ENCODE measurements at regions of chr5 and their contacts with region 1.

Region 1: GRCh38 chr5:39578887-39579497 is 154.2 kb upstream of the DAB2 start:
- DNase-seq: no peak
- H3K4me3 ChIP-seq: no peak overlapping the region
- H3K27ac ChIP-seq: no peak overlapping the region
- H3K27me3 ChIP-seq: peaks cover 0 to 5% (median 0%) of the 10 kb centered on the region in 45 donors
- CTCF ChIP-seq: peak; percentile 61 to 94 (median 79)

Region 2: GRCh38 chr5:39253196-39253595 is 325.8 kb before region 1 on chr5:
- intact Hi-C with region 1: no loop called
- DNase-seq: no peak
- H3K4me3 ChIP-seq: no peak overlapping the region
- H3K27ac ChIP-seq: no peak overlapping the region
- H3K27me3 ChIP-seq: peaks cover 0 to 8% (median 0%) of the 10 kb centered on the region in 45 donors
- CTCF ChIP-seq: no peak

Region 3: DNA sequence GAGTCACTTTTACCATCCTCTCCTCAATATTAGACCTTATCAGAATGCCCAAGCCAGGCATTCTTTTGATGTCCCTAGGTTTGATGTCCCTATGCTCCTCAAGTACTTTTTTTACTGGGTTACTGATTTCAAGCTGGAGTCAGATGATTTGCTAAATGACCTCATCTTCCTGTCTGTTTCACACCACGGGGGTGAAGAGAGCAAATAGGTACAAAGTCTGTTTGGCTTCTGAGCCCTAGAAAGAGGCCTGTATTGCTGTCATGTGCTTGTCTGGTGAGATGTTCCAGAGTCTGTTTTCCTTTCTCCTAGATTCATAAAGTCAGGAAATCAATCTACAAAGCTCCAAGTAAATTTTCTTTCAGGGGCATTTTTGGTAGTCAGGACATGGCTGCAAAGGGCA is 141.5 kb before region 1 on chr5:
- intact Hi-C with region 1: no loop called
- DNase-seq: no peak
- H3K4me3 ChIP-seq: no peak overlapping the region
- H3K27ac ChIP-seq: no peak overlapping the region
- H3K27me3 ChIP-seq: peaks cover 0 to 4% (median 0%) of the 10 kb centered on the region in 45 donors
- CTCF ChIP-seq: no peak

Region 4: GRCh38 chr5:39599721-39600431 is 20.9 kb after region 1 on chr5:
- intact Hi-C with region 1: loop called in 1 of 2 experiments (anchors 1 kb)
- DNase-seq: no peak
- H3K4me3 ChIP-seq: no peak overlapping the region
- H3K27ac ChIP-seq: no peak overlapping the region
- H3K27me3 ChIP-seq: peaks cover 0 to 7% (median 0%) of the 10 kb centered on the region in 45 donors
- CTCF ChIP-seq: peak in 54 of 56 donors; percentile 19 to 69 (median 49)

Region 5: GRCh38 chr5:40679914-40680681 is 1101.1 kb after region 1 on chr5 and contains the start of gene PTGER4:
- intact Hi-C with region 1: loop called (anchors 5 kb)
- DNase-seq: no peak
- H3K4me3 ChIP-seq: peak within 1 kb of the TSS; percentile 35 to 77 (median 67)
- H3K27ac ChIP-seq: peak within 1 kb of the TSS in 46 of 59 donors; percentile 7 to 85 (median 62)
- H3K27me3 ChIP-seq: peaks cover 0 to 86% (median 60%) of the 10 kb centered on the region in 45 donors
- CTCF ChIP-seq: no peak
- total RNA-seq, gene PTGER4: 0.46 to 6.9 (median 1.8) TPM

Region 6: GRCh38 chr5:40688127-40688761 is 1109.3 kb after region 1 on chr5:
- intact Hi-C with region 1: loop called (anchors 5 kb)
- DNase-seq: peak; percentile 63 to 91 (median 80)
- H3K4me3 ChIP-seq: peak overlapping the region in 10 of 59 donors; percentile 1 to 30 (median 4)
- H3K27ac ChIP-seq: no peak overlapping the region
- H3K27me3 ChIP-seq: peaks cover 0 to 21% (median 0%) of the 10 kb centered on the region in 45 donors
- CTCF ChIP-seq: peak; percentile 54 to 99 (median 92)

Region 7: GRCh38 chr5:40879163-40879942 is 1300.4 kb after region 1 on chr5:
- intact Hi-C with region 1: loop called in 1 of 2 experiments (anchors 5 kb)
- DNase-seq: no peak
- H3K4me3 ChIP-seq: peak overlapping the region in 16 of 59 donors; percentile 0 to 39 (median 19)
- H3K27ac ChIP-seq: no peak overlapping the region
- H3K27me3 ChIP-seq: peaks cover 0 to 2% (median 0%) of the 10 kb centered on the region in 45 donors
- CTCF ChIP-seq: peak; percentile 33 to 90 (median 68)